Mammary epithelial cell (primary cell): ENCODE measurements at regions of chr16 and their contacts with region 1.

Region 1: GRCh38 chr16:48136547-48137360 is 19.0 kb downstream of the ABCC12 start:
- DNase-seq: no peak
- H3K4me3 ChIP-seq: no peak overlapping the region
- H3K27ac ChIP-seq: no peak overlapping the region
- H3K4me1 ChIP-seq: no peaks in the 10 kb centered on the region
- H3K27me3 ChIP-seq: no peaks in the 10 kb centered on the region
- CTCF ChIP-seq: no peak

Region 2: DNA sequence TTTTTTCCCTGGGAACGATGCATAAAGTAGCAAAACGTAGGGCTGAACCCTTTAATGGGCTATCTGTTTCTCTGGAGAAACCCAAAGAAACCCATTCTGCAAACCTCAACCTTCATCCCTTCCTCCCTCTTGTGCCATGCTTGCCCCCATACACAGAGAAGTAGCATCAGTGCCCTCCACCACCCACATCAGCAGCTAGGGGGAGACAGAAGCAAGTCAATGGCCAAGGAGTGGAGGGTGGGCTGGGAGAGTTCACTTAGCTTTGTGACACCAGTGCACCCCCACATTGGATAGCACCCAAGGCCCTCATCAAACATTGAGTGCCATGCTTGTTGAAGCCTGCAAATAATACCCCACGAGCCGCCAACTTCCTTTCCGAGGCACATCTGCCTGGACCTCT is 263.3 kb before region 1 on chr16:
- CTCF ChIA-PET with region 1: no interaction called
- dilution Hi-C with region 1: no loop called
- in situ Hi-C with region 1: no loop called
- intact Hi-C with region 1: no loop called
- DNase-seq: no peak
- H3K4me3 ChIP-seq: no peak overlapping the region
- H3K27ac ChIP-seq: no peak overlapping the region
- H3K4me1 ChIP-seq: peaks cover 10% of the 10 kb centered on the region
- H3K27me3 ChIP-seq: no peaks in the 10 kb centered on the region
- CTCF ChIP-seq: peak; percentile 12 to 30

Region 3: DNA sequence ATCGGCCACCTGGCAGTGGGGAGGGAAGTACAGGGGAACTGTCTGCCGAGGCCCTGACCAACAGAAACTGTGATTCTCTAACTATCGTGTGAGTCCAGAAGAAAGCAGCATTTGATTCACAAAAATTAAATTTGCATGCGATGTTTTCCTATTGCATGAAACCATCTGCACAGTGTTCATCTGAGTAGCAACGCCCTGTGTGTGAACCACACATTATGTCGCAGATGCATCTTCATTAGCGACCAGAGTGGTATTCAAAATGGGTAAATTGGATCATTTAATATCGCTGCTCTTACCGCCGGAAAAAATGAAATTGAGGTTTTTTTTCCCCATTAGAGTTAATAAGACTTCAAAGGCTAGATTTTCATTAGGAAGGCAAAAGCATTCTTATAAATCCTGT is 241.6 kb before region 1 on chr16:
- CTCF ChIA-PET with region 1: no interaction called
- dilution Hi-C with region 1: no loop called
- in situ Hi-C with region 1: no loop called
- intact Hi-C with region 1: no loop called
- DNase-seq: no peak
- H3K4me3 ChIP-seq: no peak overlapping the region
- H3K27ac ChIP-seq: no peak overlapping the region
- H3K4me1 ChIP-seq: no peaks in the 10 kb centered on the region
- H3K27me3 ChIP-seq: no peaks in the 10 kb centered on the region
- CTCF ChIP-seq: no peak

Region 4: DNA sequence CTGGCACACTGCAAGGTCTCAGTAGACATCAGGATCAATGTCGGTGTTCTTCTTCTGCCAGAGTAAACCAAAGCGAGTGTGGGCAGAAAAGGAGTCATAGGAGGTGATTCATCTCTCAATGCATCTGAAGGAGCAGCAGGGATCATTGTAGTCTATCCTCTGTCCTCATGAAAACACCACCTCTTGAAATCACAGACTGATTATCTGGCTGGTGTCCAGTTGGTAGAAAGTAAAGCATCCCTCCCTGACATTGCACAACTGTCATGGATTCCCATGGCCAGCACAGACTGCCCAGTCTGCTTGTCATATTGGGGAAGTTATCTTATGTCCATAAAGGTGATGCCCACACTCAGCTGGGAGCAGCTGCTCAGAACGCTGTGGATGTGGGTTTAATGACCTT is 55.1 kb before region 1 on chr16:
- CTCF ChIA-PET with region 1: no interaction called
- dilution Hi-C with region 1: loop called (anchors 10 kb)
- in situ Hi-C with region 1: no loop called
- intact Hi-C with region 1: no loop called
- DNase-seq: peak; percentile 90
- H3K4me3 ChIP-seq: no peak overlapping the region
- H3K27ac ChIP-seq: no peak overlapping the region
- H3K4me1 ChIP-seq: peaks cover 14% of the 10 kb centered on the region
- H3K27me3 ChIP-seq: no peaks in the 10 kb centered on the region
- CTCF ChIP-seq: no peak